SK-N-SH (cell line): ENCODE measurements at regions of chr9 and their contacts with region 1.

Region 1: DNA sequence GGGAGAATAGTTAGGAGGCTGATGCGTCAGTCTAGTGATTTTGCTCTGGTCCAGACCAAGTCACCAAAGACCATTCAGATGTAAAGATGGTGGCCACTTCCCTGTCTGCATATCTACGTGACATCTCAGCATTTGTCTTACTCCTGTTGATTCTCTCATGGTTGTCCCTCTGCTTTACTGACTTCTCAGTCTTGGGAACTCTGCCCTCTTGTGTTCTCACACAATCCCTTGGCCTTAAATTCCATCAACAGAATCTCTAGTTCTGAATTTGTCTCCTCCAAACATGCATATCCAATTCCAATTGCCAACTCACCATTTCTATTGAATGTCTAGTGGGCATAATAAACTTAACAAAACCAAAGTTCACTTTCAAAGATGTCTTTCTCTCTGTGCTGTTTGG is 147.8 kb downstream of the SLC24A2 start:
- DNase-seq: no peak
- H3K4me3 ChIP-seq: no peak overlapping the region
- H3K27ac ChIP-seq: no peak overlapping the region
- H3K4me1 ChIP-seq: no peaks in the 10 kb centered on the region
- H3K27me3 ChIP-seq: no peaks in the 10 kb centered on the region
- CTCF ChIP-seq: 0 out of 2 replicates have a peak, but pooled peaks have one; percentile 19
- EP300 ChIP-seq: no peak
- RAD21 ChIP-seq: peak; percentile 48

Region 2: DNA sequence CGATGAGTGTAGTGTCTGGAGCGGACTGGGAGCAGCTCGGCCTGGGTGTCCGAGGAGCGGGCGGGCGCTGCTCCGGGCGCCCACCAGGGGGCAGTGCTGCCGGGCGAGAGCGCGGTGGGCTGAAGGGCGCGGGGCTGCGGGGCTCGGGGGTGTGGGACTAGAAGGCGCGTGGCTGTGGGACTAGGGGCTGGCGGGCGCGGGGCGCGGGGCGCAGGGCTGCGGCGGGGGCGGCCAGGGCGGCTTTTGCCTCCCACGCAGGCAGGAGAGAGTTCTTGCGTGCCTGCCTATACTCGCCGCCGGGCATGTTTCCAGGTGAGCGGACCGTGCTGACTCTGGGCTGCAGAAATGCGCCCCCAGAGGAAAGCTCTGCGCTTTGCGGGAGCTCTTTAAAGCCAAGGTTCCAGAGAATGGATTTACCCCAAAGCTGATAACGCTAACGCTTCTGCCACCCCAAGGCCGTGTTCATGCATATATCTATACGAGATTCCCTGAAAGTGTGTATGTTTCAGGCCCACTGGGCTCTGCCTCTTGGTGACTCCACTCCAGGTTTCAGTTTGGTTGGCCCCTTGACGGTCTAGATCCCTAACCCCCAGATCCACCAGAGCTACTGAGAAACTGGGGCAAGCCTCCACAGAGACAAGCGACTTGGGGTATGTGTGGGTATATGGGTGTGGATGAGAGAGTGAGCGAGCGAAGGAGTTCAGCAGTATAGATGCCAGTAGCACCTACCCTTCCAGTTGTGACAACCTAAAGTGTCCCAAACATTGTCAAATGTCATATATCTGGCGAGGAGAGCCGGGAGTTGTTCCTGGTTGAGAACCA is 176.1 kb before region 1 on chr9:
- CTCF ChIA-PET with region 1: interaction called, 19 read pairs
- POLR2A ChIA-PET with region 1: no interaction called
- DNase-seq: peak; percentile 94
- H3K4me3 ChIP-seq: peak overlapping the region; percentile 46 to 70
- H3K27ac ChIP-seq: no peak overlapping the region
- H3K4me1 ChIP-seq: peaks cover 0 to 5% of the 10 kb centered on the region in 2 experiments; a peak in 1 of 4 replicates
- H3K27me3 ChIP-seq: no peaks in the 10 kb centered on the region
- CTCF ChIP-seq: peak; percentile 89
- EP300 ChIP-seq: no peak
- RAD21 ChIP-seq: peak; percentile 29; the same call in 1 of the 2 replicates

Region 3: GRCh38 chr9:19471737-19472648 is 169.1 kb before region 1 on chr9:
- CTCF ChIA-PET with region 1: interaction called, 21 read pairs
- POLR2A ChIA-PET with region 1: no interaction called
- DNase-seq: peak; percentile 80
- H3K4me3 ChIP-seq: peak overlapping the region; percentile 13 to 58
- H3K27ac ChIP-seq: no peak overlapping the region
- H3K4me1 ChIP-seq: peaks cover 0 to 10% of the 10 kb centered on the region in 2 experiments; a peak in 2 of 4 replicates
- H3K27me3 ChIP-seq: peaks cover 4% of the 10 kb centered on the region; the same call in 1 of the 2 replicates
- CTCF ChIP-seq: peak; percentile 81
- EP300 ChIP-seq: no peak
- RAD21 ChIP-seq: peak; percentile 82

Region 4: DNA sequence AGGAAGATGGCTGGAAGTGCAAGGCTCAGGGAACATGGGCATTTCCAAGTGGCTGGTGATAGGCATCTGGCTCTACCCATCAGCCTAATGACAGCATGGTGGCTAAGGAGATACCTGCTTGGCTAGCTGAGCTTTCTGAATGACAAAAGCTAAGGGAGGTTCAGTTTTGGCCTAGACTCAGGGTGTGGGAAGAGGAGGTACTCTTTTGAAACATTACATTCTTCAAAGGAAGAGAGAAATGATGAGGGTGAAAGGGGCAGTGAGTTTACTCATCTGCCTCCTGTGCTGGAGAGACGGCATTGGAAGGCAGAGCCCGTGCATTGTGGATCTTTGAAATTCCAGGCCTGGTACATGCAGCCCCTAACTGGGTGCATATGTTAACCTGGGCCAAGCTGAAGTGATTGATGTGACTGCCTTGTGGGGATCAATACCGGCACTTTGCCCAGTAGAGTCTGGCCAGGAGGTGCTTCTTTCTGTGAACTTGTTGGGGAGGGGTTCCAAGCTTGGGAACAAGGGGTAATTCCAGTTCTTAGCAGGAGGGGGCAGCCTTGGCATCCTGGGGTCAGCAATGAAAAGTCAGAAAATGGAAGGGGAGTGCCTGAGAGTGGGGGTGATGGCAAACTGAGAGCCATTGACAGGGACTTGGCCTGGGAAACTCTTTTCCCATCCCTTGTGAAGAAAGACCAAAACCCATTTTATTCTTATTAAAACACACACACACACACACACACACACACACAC is 123.7 kb before region 1 on chr9:
- CTCF ChIA-PET with region 1: interaction called, 15 read pairs
- POLR2A ChIA-PET with region 1: no interaction called
- DNase-seq: peak; percentile 41
- H3K4me3 ChIP-seq: no peak overlapping the region; a peak in 1 of 4 replicates
- H3K27ac ChIP-seq: no peak overlapping the region
- H3K4me1 ChIP-seq: no peaks in the 10 kb centered on the region; a peak in 1 of 4 replicates
- H3K27me3 ChIP-seq: no peaks in the 10 kb centered on the region
- CTCF ChIP-seq: peak; percentile 39
- EP300 ChIP-seq: no peak
- RAD21 ChIP-seq: peak; percentile 52

Region 5: GRCh38 chr9:19568946-19569345 is 72.1 kb before region 1 on chr9:
- CTCF ChIA-PET with region 1: no interaction called
- POLR2A ChIA-PET with region 1: no interaction called
- DNase-seq: no peak
- H3K4me3 ChIP-seq: no peak overlapping the region
- H3K27ac ChIP-seq: no peak overlapping the region
- H3K4me1 ChIP-seq: no peaks in the 10 kb centered on the region; a peak in 1 of 4 replicates
- H3K27me3 ChIP-seq: no peaks in the 10 kb centered on the region
- CTCF ChIP-seq: no peak
- EP300 ChIP-seq: no peak
- RAD21 ChIP-seq: no peak